Heart left ventricle (tissue), 16 donors: ENCODE measurements at regions of chr10 and their contacts with region 1.

Region 1: DNA sequence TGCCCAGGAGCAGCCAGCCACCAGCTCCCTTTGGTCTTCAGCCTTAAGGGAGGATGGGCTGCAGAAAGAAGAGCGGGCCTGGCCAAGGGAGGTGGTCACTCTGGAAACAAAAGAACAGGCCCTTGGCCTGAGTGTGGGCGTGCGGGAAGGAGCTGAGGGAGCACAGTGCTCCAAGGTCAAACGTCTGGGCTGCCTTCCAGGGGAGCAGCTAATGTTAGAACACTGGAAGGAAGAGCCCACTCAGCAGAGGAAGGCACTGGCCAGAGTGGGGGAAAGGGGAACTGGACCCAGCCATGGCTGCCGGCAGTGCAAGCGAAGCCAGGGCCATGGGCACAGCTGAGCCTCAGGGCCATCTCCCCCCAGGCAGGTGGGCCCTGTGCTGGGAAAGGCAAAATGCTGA is 42.7 kb downstream of the FAM53B start:
- DNase-seq: peak; percentile 94 to 98 (median 97)
- ATAC-seq: peak; percentile 84 to 90 (median 85)
- H3K4me3 ChIP-seq: no peak overlapping the region
- H3K27ac ChIP-seq: peak overlapping the region; percentile 88 to 97 (median 93)
- H3K4me1 ChIP-seq: peaks cover 49 to 100% (median 99%) of the 10 kb centered on the region in 12 donors
- H3K27me3 ChIP-seq: no peaks in the 10 kb centered on the region
- CTCF ChIP-seq: peak in 1 of 12 donors; percentile 13
- POLR2A ChIP-seq: peak in 1 of 2 donors; percentile 23

Region 2: DNA sequence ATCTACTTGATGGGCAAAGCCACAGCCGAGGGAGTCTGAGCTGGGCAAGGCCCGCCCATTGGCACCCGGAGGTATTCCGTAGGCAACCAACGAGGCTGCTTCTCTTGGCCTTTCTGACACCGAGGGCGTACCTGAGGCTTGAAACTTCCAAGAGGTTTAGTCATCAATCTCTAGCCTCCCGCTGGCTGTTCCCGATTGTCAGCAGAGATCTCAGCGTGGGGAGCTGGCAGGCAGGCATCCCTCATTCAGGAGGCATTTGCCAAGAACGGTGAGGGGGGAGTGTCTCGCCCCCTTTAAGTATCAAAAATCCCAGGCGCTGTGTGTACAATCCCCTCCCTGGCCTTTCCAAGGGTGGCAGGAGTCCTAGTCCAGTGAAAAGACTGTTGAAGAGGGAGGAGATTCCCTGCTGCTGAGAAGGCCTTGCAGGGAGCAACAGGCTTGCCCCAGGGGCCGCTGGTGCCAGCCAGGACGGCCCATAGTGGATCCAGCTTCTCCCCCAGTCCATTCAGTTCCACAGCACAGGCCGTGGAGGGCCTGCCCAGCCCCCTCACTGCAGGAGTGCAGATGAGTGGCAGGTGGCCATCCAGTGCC is 322.5 kb before region 1 on chr10:
- intact Hi-C with region 1: no loop called
- DNase-seq: no peak
- ATAC-seq: no peak
- H3K4me3 ChIP-seq: no peak overlapping the region
- H3K27ac ChIP-seq: no peak overlapping the region
- H3K4me1 ChIP-seq: no peaks in the 10 kb centered on the region
- H3K27me3 ChIP-seq: peaks cover 0 to 30% (median 0%) of the 10 kb centered on the region in 9 donors
- CTCF ChIP-seq: no peak
- POLR2A ChIP-seq: no peak

Region 3: DNA sequence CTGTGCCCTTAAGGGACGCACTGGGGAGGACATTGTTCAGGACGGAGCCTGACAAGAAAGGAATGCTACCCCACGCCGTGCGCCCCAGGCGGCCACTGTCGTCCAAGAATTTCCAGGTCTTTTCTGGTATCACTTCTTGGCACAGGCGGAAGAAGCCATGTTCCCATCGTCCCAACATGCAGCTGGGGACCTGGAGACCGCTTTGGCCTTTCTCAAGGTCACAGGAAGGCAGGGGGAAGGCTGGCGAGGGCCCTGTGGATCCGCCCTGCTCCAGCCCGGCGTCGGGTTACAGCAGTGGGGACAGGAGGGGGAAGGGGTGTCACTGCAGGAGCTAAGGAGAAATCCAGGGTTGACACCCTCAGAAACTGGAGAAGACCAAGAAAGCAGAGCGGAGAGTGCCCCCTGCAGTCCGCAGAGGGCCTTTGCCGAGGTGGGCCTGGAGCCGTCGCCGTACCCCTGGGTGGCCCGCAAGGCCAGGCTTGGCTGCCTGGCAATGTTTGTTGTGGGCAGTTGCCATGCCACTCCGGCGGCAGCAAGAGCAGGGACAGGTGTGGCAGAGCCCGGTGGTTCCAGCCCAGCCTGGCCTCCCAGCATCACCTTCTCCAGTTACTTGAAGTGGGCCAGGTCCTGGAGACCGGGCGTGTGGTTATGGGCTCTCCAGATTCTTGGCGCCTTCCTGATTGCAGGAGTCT is 135.7 kb before region 1 on chr10:
- intact Hi-C with region 1: no loop called
- DNase-seq: peak in 3 of 5 donors; percentile 52 to 72 (median 60)
- ATAC-seq: peak; percentile 16 to 60 (median 53)
- H3K4me3 ChIP-seq: no peak overlapping the region
- H3K27ac ChIP-seq: peak overlapping the region in 1 of 12 donors; percentile 25
- H3K4me1 ChIP-seq: peaks cover 5 to 22% (median 13%) of the 10 kb centered on the region in 12 donors
- H3K27me3 ChIP-seq: no peaks in the 10 kb centered on the region
- CTCF ChIP-seq: peak; percentile 18 to 49 (median 32)
- POLR2A ChIP-seq: no peak

Region 4: DNA sequence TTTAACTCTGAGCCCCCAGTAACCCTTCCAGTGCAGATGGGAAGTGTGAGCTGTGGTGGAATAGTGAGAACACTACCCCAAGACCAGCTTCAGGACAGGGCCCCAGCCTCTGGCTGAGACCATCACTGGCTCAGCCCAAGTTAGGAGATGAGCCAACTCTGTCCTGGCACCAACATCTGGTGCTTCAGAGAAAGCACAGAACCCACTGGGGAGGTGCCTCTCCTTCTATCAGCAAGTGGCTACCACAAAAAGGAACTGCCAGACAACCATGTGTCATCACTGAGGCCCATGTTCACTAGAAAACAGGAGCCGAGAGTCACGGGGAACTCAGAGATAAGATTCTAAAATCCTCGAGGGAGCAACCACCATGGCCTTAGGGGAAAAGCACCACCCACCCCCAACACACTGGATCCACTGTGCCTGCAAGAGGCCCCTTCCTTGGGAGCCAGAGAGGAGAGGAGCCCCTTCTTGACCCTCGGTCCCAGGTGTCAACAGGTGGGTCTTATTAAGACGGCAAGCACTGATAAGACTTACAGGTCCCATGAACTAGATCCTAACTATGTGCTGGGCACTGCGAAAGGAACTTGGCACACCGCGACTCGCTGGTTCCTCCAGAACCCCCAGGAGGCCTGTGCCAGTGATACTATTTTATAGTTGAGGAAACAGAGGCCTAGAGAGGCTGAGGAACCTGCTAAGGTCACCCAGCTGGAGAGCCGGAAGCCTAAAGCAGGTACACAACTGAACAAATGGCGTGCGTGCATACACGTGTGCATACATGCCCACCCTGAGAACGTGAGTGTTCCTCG is 60.0 kb before region 1 on chr10:
- intact Hi-C with region 1: loop called in 3 of 10 experiments (anchors 5 to 10 kb)
- DNase-seq: peak in 4 of 5 donors; percentile 71 to 84 (median 80)
- ATAC-seq: peak; percentile 73 to 80 (median 80)
- H3K4me3 ChIP-seq: peak overlapping the region in 2 of 12 donors; percentile 10 to 14
- H3K27ac ChIP-seq: peak overlapping the region; percentile 48 to 93 (median 79)
- H3K4me1 ChIP-seq: peaks cover 11 to 100% (median 83%) of the 10 kb centered on the region in 12 donors
- H3K27me3 ChIP-seq: no peaks in the 10 kb centered on the region
- CTCF ChIP-seq: no peak
- POLR2A ChIP-seq: no peak

Region 5: DNA sequence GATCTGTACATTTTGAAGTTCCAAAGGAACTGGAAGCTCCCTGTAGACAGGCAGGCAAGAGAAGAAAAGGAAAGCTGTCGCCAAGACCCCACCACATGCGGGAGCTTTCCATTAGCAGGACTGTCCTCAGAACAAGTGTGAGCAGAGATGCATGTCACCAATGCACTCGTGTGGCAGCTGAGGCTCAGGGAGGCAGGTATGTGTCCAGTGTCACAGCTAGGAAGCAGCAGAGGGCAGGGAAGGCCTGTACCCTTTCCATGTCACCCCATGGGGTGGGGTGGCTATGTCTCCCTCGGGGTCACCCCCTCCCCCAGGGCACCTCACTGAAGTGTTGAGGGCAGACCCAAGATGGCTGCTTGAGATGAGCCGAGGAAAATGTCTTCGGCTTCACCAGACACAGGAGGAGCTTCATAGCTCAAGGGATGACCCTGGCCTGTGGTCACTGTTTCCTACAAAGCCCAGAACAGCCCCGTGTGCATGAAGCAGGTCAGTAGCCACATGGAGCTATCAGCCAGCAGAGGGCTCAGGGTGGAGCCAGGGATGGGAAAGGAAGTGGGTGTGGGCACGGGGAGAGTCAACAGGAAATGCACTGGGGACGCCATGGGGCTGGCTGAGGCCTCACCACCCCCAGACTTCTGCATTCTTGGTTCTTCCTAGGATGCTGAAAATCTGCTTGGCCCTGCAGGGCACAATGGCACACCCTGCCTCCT is 53.9 kb before region 1 on chr10:
- intact Hi-C with region 1: loop called in 3 of 10 experiments (anchors 5 to 10 kb)
- DNase-seq: peak; percentile 75 to 88 (median 84)
- ATAC-seq: peak; percentile 34 to 67 (median 56)
- H3K4me3 ChIP-seq: peak overlapping the region in 1 of 12 donors; percentile 7
- H3K27ac ChIP-seq: peak overlapping the region; percentile 33 to 97 (median 75)
- H3K4me1 ChIP-seq: peaks cover 44 to 100% (median 94%) of the 10 kb centered on the region in 12 donors
- H3K27me3 ChIP-seq: no peaks in the 10 kb centered on the region
- CTCF ChIP-seq: peak in 10 of 12 donors; percentile 11 to 50 (median 28)
- POLR2A ChIP-seq: no peak

Region 6: GRCh38 chr10:124688889-124689670 is 12.4 kb before region 1 on chr10:
- intact Hi-C with region 1: loop called in 1 of 10 experiments (anchors 2 kb)
- DNase-seq: no peak
- ATAC-seq: peak in 2 of 4 donors; percentile 43 to 52
- H3K4me3 ChIP-seq: no peak overlapping the region
- H3K27ac ChIP-seq: peak overlapping the region in 11 of 12 donors; percentile 7 to 89 (median 66)
- H3K4me1 ChIP-seq: peaks cover 7 to 100% (median 78%) of the 10 kb centered on the region in 12 donors
- H3K27me3 ChIP-seq: no peaks in the 10 kb centered on the region
- CTCF ChIP-seq: no peak
- POLR2A ChIP-seq: no peak